ENCODE measurements at regions of chr5 and their contacts with region 1.

Region 1: DNA sequence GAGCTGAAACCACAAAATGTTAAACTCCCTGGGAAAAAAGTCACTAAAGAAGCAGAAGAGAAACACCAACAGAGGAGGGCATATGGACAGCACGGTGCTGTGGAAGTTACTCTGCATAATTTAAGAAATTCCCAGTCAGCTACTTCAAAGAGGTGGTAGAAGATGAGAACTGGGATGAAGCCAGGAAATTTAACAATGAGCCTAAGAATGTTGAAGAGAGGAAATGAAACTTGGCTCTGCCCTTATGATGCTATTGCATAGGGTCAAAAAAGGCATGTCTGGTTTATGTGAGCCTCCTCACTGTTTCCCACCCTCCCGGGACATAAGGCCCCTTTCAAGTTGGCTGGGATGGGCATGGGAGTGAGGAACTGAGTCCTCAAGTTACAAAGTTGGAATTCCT is 25.4 kb upstream of the SNX18 start:
- DNase-seq: no peak
- H3K4me3 ChIP-seq: no peak overlapping the region
- H3K27ac ChIP-seq: no peak overlapping the region
- H3K4me1 ChIP-seq: no peaks in the 10 kb centered on the region
- H3K27me3 ChIP-seq: no peaks in the 10 kb centered on the region
- CTCF ChIP-seq: no peak
- EP300 ChIP-seq: no peak
- POLR2A ChIP-seq: no peak
- RAD21 ChIP-seq: no peak

Region 2: GRCh38 chr5:54243473-54244080 is 248.6 kb before region 1 on chr5:
- CTCF ChIA-PET with region 1: interaction called, 74 read pairs
- POLR2A ChIA-PET with region 1: no interaction called
- DNase-seq: no peak
- H3K4me3 ChIP-seq: no peak overlapping the region
- H3K27ac ChIP-seq: no peak overlapping the region
- H3K4me1 ChIP-seq: no peaks in the 10 kb centered on the region
- H3K27me3 ChIP-seq: no peaks in the 10 kb centered on the region
- CTCF ChIP-seq: peak in 2 of 3 experiments; percentile 64 to 66; a peak in 3 of 4 replicates
- EP300 ChIP-seq: no peak
- POLR2A ChIP-seq: no peak
- RAD21 ChIP-seq: peak; percentile 85 to 86

Region 3: GRCh38 chr5:54310433-54311175 is 181.6 kb before region 1 on chr5 and contains the start of gene ARL15:
- CTCF ChIA-PET with region 1: interaction called, 26 read pairs
- POLR2A ChIA-PET with region 1: interaction called, 3 read pairs
- DNase-seq: peak; percentile 89 to 99
- H3K4me3 ChIP-seq: peak within 1 kb of the TSS; percentile 81 to 86 (median 84)
- H3K27ac ChIP-seq: peak within 1 kb of the TSS; percentile 60
- H3K4me1 ChIP-seq: peaks cover 0 to 6% (median 3%) of the 10 kb centered on the region in 4 experiments; a peak in 4 of 7 replicates
- H3K27me3 ChIP-seq: peaks cover 0 to 2% (median 0%) of the 10 kb centered on the region in 4 experiments; a peak in 1 of 7 replicates
- CTCF ChIP-seq: no peak
- EP300 ChIP-seq: no peak
- POLR2A ChIP-seq: peak; percentile 100
- RAD21 ChIP-seq: no peak
- total RNA-seq, gene ARL15: 21.2 and 22.5 TPM in 2 replicates

Region 4: GRCh38 chr5:54443270-54443669 is 48.9 kb before region 1 on chr5:
- CTCF ChIA-PET with region 1: interaction called, 73 read pairs
- POLR2A ChIA-PET with region 1: no interaction called
- DNase-seq: no peak
- H3K4me3 ChIP-seq: no peak overlapping the region
- H3K27ac ChIP-seq: no peak overlapping the region
- H3K4me1 ChIP-seq: no peaks in the 10 kb centered on the region
- H3K27me3 ChIP-seq: no peaks in the 10 kb centered on the region
- CTCF ChIP-seq: peak in 2 of 3 experiments; percentile 47 to 58; a peak in 2 of 4 replicates
- EP300 ChIP-seq: no peak
- POLR2A ChIP-seq: no peak
- RAD21 ChIP-seq: peak; percentile 49 to 55

Region 5: GRCh38 chr5:54480296-54480695 is 11.9 kb before region 1 on chr5:
- CTCF ChIA-PET with region 1: interaction called, 32 read pairs
- POLR2A ChIA-PET with region 1: no interaction called
- DNase-seq: no peak
- H3K4me3 ChIP-seq: no peak overlapping the region
- H3K27ac ChIP-seq: no peak overlapping the region
- H3K4me1 ChIP-seq: no peaks in the 10 kb centered on the region
- H3K27me3 ChIP-seq: no peaks in the 10 kb centered on the region
- CTCF ChIP-seq: no peak
- EP300 ChIP-seq: no peak
- POLR2A ChIP-seq: no peak
- RAD21 ChIP-seq: no peak

Measured in H1 (cell line).